Left cardiac atrium (tissue), 4 donors: ENCODE measurements at regions of chr17 and their contacts with region 1.

Region 1: DNA sequence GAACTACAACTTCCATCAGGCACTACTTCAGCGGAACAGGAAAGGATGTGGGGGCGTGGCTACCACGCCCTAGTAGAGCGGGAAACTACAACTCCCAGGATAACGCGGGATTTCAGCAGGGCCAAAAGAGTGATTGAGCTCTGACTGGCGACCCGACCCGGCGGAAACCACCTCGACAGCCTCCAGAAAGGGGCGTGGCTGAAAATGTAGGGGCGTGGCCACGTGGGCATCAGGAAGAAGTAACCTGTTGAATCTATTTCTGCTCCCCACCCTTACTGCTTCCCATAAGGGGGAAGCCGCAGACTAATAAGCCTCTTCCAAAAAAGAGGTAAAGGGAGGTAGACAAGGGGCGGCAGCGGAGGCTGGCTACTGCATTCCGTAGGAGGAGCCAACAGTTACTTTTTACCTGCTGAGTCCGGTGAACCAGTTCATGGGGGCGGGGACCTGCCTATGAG is at the start of gene TMEM102:
- DNase-seq: peak; percentile 96
- ATAC-seq: peak; percentile 82 to 87
- total RNA-seq, gene TMEM102: 2.7 to 2.9 TPM

Region 2: DNA sequence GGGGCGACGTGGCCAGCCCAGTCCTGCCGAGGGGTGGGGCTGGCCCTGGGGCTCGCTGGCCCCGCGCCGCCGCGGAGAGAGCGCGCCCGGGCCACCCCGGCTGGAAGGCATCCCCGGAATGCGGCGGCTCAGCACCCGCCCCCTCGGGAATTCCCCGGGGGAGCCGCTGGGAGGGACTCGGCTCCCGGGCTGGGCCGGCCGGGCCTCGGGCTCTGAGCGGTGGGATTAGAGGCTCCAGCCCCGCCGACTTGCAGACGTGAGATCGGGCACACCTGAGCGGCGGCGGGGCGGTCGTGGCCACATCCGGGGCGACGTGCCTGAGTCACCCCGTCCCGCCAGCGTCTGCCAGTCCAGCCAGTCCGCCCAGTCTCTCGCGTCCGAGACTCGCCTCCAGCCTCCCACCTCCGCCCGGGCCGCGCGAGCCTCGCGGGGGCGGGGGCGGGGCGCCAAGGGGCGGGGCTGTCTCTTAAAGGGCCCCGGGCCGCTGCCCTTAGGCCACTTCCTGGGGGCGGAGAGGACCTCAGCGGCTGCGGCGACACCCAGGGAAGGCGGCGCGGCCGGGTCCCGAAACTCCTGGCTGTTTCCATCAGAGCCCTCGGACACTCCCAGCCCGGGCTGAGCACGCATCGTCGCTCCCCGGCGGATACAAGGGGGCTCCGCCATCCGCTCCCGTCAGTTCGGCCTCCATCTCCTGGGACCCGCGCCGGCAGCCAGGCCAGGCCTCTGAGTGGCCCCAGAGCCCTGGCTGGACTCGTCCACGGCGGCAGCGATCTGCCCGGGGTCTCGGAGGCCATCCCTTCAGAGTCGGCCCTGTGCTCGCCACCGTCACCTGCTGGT is 83.4 kb before region 1 on chr17 and contains the start of gene KCTD11:
- intact Hi-C with region 1: loop called in 1 of 2 experiments (anchors 5 kb)
- DNase-seq: peak; percentile 93
- ATAC-seq: peak; percentile 79 to 80
- total RNA-seq, gene KCTD11: 5.3 to 5.9 TPM

Region 3: DNA sequence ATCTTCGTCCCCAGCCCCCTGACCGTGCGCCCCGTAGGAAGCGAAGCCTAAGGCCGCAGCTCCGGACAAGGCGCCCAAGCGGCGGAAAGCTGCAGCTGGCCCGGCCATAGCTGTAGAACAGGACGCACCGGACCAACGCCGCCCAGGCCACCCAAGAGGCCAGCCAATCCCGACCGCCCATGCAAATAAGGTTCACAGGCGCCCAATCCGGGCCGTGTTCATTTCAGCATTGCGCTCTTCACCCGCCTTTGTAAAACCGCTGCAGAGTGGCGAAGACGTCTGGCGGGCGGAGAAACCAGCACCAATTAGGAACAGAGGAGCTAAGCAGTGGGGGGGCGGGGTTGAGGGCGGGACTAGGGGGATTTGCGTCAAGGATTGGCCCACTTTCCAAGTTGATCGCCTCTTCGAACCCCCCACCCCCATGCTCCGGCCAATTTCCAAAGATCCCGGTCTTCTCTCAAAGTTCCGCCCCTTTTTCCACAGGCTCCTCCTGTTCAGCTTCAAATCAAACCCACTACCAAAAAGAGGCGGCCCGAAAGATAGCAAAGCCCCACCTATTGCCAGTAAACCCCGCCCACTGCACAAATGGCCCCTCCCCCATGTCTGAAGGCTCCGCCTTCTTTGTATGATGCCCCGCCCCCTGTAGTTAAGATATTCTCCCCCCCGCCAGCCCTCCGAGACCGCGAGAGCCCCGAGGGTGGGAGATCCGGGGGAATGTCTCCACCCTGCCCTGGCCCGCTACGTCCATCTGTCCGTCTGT is 31.1 kb before region 1 on chr17 and contains the start of gene TMEM256:
- intact Hi-C with region 1: loop called in 1 of 2 experiments (anchors 2 kb)
- DNase-seq: peak; percentile 99
- ATAC-seq: peak; percentile 91 to 94
- total RNA-seq, gene TMEM256: 67.3 to 69.2 TPM

Region 4: GRCh38 chr17:7484067-7484918 is 49.0 kb after region 1 on chr17 and contains the start of gene POLR2A:
- intact Hi-C with region 1: loop called (anchors 2 to 5 kb)
- DNase-seq: peak; percentile 99
- ATAC-seq: peak; percentile 83 to 90
- total RNA-seq, gene POLR2A: 42.8 to 56.9 TPM

Region 5: DNA sequence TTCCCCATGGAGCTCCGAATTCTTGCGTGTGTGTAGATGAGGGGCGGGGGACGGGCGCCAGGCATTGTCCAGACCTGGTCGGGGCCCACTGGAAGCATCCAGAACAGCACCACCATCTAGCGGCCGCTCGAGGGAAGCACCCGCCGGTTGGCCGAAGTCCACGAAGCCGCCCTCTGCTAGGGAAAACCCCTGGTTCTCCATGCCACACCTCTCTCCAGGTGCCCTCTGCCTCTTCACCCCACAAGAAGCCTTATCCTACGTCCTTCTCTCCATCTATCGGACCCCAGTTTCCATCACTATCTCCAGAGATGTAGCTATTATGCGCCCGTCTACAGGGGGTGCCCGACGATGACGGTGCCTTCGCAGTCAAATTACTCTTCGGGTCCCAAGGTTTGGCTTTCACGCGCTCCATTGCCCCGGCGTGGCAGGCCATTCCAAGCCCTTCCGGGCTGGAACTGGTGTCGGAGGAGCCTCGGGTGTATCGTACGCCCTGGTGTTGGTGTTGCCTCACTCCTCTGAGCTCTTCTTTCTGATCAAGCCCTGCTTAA is 125.9 kb after region 1 on chr17:
- intact Hi-C with region 1: loop called (anchors 5 to 10 kb)
- DNase-seq: peak; percentile 93
- ATAC-seq: peak; percentile 76 to 83